ENCODE measurements at regions of chr19 and their contacts with region 1.

Region 1: DNA sequence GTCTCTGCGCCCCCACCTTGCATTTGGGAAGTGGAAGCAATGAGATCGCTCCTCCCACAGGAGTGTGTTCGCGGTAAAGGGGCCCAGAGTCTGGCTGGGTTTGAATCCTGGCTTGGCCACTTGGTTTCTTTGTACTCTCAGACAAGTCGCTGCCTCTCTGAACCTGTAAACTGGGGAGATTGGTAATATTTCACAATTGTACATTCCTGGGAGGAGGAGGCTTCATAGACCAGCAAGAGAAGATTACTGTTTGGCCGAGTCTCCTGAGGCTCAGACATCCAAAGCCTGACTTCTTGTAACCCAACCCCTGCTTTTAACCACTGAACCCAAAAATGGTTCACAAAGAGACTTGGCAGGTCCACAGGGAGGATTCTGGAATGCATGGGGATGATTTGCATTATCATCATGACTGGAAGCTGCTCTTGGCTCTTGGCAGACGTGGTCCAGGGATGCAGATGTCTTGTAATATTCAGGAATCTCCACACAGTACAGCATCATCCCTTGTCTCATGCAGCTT is 13.6 kb upstream of the STRN4 start:
- DNase-seq: no peak
- ATAC-seq: no peak
- H3K4me3 ChIP-seq: no peak overlapping the region
- H3K4me3 Mint-ChIP-seq: no peak overlapping the region
- H3K27ac ChIP-seq: no peak overlapping the region
- H3K27ac Mint-ChIP-seq: no peak overlapping the region
- H3K4me1 ChIP-seq: peaks cover 0 to 5% of the 10 kb centered on the region in 2 donors
- H3K4me1 Mint-ChIP-seq: peaks cover 2% of the 10 kb centered on the region
- H3K27me3 ChIP-seq: no peaks in the 10 kb centered on the region
- H3K27me3 Mint-ChIP-seq: no peaks in the 10 kb centered on the region
- CTCF ChIP-seq: no peak

Region 2: DNA sequence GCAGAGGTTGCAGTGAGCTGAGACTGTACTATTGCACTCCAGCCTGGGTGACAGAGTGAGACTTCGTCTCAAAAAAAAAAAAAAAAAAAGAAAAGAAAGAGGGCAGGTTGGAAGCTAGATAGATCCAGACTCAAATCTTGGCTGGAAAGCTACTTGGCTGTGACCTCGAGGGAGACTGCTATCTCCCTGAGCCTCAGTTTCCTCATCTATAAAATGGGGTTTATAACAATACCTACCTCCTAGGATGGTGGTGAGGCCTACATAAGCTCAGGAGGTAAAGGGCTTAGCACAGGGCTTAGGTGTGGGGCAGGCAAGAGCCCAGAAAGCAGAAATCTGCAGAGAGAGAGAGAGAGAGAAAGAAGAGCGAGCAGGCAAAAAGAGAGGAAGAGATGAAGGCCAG is 74.7 kb before region 1 on chr19:
- CTCF ChIA-PET with region 1: no interaction called
- POLR2A ChIA-PET with region 1: no interaction called
- intact Hi-C with region 1: no loop called
- DNase-seq: no peak
- ATAC-seq: no peak
- H3K4me3 ChIP-seq: no peak overlapping the region
- H3K4me3 Mint-ChIP-seq: no peak overlapping the region
- H3K27ac ChIP-seq: no peak overlapping the region
- H3K27ac Mint-ChIP-seq: no peak overlapping the region
- H3K4me1 ChIP-seq: no peaks in the 10 kb centered on the region
- H3K4me1 Mint-ChIP-seq: no peaks in the 10 kb centered on the region
- H3K27me3 ChIP-seq: no peaks in the 10 kb centered on the region
- H3K27me3 Mint-ChIP-seq: no peaks in the 10 kb centered on the region
- CTCF ChIP-seq: no peak

Region 3: GRCh38 chr19:46717034-46717723 is 42.7 kb before region 1 on chr19 and contains the start of gene PRKD2:
- CTCF ChIA-PET with region 1: no interaction called
- POLR2A ChIA-PET with region 1: interaction called, 10 read pairs
- intact Hi-C with region 1: no loop called
- DNase-seq: peak; percentile 89
- ATAC-seq: peak; percentile 48
- H3K4me3 ChIP-seq: peak within 1 kb of the TSS; percentile 77 to 99 (median 92)
- H3K4me3 Mint-ChIP-seq: peak within 1 kb of the TSS; percentile 97
- H3K27ac ChIP-seq: peak within 1 kb of the TSS; percentile 89 to 92
- H3K27ac Mint-ChIP-seq: peak within 1 kb of the TSS; percentile 95
- H3K4me1 ChIP-seq: peaks cover 58 to 75% of the 10 kb centered on the region in 2 donors
- H3K4me1 Mint-ChIP-seq: peaks cover 66% of the 10 kb centered on the region
- H3K27me3 ChIP-seq: no peaks in the 10 kb centered on the region
- H3K27me3 Mint-ChIP-seq: no peaks in the 10 kb centered on the region
- CTCF ChIP-seq: no peak
- total RNA-seq, gene PRKD2: 185 and 192 TPM in 2 replicates

Measured in B cell (primary cell).